CD4-positive, alpha-beta T cell (primary cell): ENCODE measurements at regions of chr17 and their contacts with region 1.

Region 1: GRCh38 chr17:76557368-76558197 is 17.7 kb downstream of the PRCD start:
- DNase-seq: peak; percentile 86 to 97 (median 90)
- ATAC-seq: peak; percentile 82
- H3K4me3 ChIP-seq: peak overlapping the region; percentile 95
- H3K4me3 Mint-ChIP-seq: peak overlapping the region; percentile 96
- H3K27ac ChIP-seq: peak overlapping the region; percentile 93 to 97
- H3K27ac Mint-ChIP-seq: peak overlapping the region; percentile 97
- H3K4me1 ChIP-seq: peaks cover 58% of the 10 kb centered on the region
- H3K4me1 Mint-ChIP-seq: peaks cover 58% of the 10 kb centered on the region
- H3K27me3 ChIP-seq: no peaks in the 10 kb centered on the region
- H3K27me3 Mint-ChIP-seq: no peaks in the 10 kb centered on the region
- CTCF ChIP-seq: peak; percentile 35

Region 2: GRCh38 chr17:76452660-76453430 is 104.7 kb before region 1 on chr17 and contains the start of gene UBE2O:
- CTCF ChIA-PET with region 1: no interaction called
- POLR2A ChIA-PET with region 1: interaction called, 3 read pairs
- intact Hi-C with region 1: loop called in 1 of 2 experiments (anchors 2 kb)
- DNase-seq: peak; percentile 82 to 97 (median 92)
- ATAC-seq: peak; percentile 90
- H3K4me3 ChIP-seq: peak within 1 kb of the TSS; percentile 69
- H3K4me3 Mint-ChIP-seq: peak within 1 kb of the TSS; percentile 79
- H3K27ac ChIP-seq: peak within 1 kb of the TSS; percentile 50 to 65
- H3K27ac Mint-ChIP-seq: peak within 1 kb of the TSS; percentile 82
- H3K4me1 ChIP-seq: peaks cover 30% of the 10 kb centered on the region
- H3K4me1 Mint-ChIP-seq: peaks cover 45% of the 10 kb centered on the region
- H3K27me3 ChIP-seq: no peaks in the 10 kb centered on the region
- H3K27me3 Mint-ChIP-seq: no peaks in the 10 kb centered on the region
- CTCF ChIP-seq: peak; percentile 47
- total RNA-seq, gene UBE2O: 22.7 to 25.1 TPM

Region 3: DNA sequence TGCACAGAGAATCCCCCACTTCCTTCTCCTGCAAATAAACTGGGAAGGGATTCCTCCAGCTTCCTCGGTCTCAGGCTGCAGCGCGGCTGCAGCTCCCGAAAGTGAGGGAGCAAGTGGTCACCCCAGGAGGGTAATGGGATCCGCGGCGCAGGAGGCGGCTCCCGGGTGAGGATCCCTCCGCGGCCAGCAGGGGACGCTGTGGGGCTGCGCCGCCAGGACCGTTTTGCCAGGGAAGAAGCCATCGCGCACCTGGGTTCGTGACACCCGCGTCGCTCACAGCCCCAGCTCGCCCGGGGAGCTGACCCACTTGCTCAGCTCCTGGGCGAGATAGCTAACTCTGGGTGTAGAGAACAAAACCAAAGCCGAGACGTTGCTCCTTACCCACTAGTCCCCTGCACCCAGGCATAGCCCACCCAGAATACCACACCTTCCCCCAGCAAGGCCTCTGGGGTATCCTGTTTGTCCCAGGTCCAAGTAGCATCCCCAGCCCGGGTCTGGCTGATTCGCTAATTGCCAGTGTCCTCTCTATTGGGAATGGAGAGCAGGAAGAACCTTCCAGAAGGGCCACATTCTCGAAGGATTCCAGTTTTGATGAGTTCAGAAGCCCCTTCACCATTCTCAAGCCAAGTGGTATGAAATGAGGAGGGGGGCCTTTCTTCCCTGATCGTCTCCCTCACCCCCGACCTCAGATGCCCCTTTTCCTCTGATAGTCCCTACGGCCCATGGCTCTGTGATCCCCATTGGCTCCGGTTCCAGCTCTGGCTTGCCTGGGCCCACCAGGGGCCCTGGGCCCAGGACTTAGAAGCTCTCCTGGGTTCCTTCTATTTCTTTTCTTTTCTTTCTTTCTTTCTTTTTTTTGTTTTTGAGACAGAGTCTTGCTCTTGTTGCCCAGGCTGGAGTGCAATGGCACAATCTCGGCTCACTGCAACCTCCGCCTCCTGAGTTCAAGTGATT is 34.2 kb before region 1 on chr17:
- CTCF ChIA-PET with region 1: interaction called, 14 read pairs
- POLR2A ChIA-PET with region 1: interaction called, 5 read pairs
- intact Hi-C with region 1: loop called in 1 of 2 experiments (anchors 5 kb)
- DNase-seq: peak; percentile 66 to 93 (median 81)
- ATAC-seq: peak; percentile 88
- H3K4me3 ChIP-seq: no peak overlapping the region
- H3K4me3 Mint-ChIP-seq: no peak overlapping the region
- H3K27ac ChIP-seq: no peak overlapping the region
- H3K27ac Mint-ChIP-seq: peak overlapping the region; percentile 41
- H3K4me1 ChIP-seq: peaks cover 35% of the 10 kb centered on the region
- H3K4me1 Mint-ChIP-seq: peaks cover 26% of the 10 kb centered on the region
- H3K27me3 ChIP-seq: no peaks in the 10 kb centered on the region
- H3K27me3 Mint-ChIP-seq: no peaks in the 10 kb centered on the region
- CTCF ChIP-seq: peak; percentile 99

Region 4: DNA sequence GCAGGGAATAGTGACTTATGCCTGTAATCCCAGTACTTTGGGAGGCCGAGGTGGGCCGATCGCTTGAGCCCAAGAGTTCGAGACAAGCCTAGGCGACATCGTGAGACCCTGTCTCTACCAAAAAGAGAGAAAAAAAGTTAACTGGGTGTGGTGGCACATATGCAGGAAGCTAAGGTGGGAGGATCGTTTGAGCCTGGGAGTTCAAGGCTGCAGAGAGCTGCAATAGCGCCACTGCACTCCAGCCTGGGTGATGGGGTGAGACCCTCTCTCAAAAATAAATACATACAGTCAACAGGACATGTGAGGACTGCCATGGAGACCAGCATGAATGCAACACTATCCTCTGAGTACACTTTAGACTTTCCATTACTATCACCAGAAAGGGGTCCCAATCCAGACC is 43.5 kb after region 1 on chr17:
- CTCF ChIA-PET with region 1: no interaction called
- POLR2A ChIA-PET with region 1: no interaction called
- intact Hi-C with region 1: no loop called
- DNase-seq: no peak
- ATAC-seq: no peak
- H3K4me3 ChIP-seq: no peak overlapping the region
- H3K4me3 Mint-ChIP-seq: no peak overlapping the region
- H3K27ac ChIP-seq: no peak overlapping the region
- H3K27ac Mint-ChIP-seq: no peak overlapping the region
- H3K4me1 ChIP-seq: peaks cover 18% of the 10 kb centered on the region
- H3K4me1 Mint-ChIP-seq: peaks cover 18% of the 10 kb centered on the region
- H3K27me3 ChIP-seq: no peaks in the 10 kb centered on the region
- H3K27me3 Mint-ChIP-seq: peaks cover 26% of the 10 kb centered on the region
- CTCF ChIP-seq: no peak

Region 5: DNA sequence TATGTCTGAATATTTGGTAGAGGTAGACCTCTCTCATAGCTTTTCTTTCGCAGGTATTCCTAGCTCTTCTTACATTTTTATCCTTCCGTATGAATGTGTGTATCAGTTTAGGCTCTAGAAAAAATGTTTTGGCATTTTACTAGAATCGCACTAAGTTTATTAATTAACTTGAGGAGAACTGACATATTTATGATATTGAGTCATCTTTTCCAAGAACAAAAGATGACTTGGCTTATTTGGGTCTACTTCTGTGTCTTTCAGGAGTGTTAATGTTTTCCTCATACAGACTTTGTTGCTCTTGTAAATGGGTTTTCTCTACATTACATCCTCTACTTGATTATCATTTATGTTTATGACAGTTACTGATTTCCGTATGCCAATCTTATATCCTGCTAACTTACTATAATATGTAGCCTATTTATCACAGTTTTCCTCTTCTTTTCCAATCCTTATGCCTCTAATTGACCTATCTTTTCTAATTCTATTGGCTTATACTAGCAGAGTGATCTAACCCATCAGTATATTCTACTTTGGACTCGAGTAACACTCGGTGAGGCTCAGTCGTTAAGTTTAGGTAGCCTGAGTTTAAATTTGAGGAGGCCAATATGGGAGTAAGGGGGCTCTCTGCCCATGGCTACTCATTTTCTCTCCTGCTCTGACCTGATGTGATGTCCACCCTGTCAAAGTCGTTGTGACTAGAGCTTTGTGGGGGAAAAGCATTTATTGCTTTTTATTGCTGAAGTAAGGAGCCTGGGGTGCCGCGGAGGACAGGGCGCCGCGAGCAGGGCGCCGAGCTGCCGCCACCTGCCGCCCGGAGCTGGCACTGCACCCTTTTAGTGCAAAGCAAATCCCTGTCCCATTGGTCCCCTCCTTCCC is 65.9 kb after region 1 on chr17:
- CTCF ChIA-PET with region 1: interaction called, 21 read pairs
- POLR2A ChIA-PET with region 1: interaction called, 10 read pairs
- intact Hi-C with region 1: loop called in 1 of 2 experiments (anchors 1 kb)
- DNase-seq: peak; percentile 59 to 87 (median 74)
- ATAC-seq: peak; percentile 99
- H3K4me3 ChIP-seq: no peak overlapping the region
- H3K4me3 Mint-ChIP-seq: no peak overlapping the region
- H3K27ac ChIP-seq: no peak overlapping the region
- H3K27ac Mint-ChIP-seq: no peak overlapping the region
- H3K4me1 ChIP-seq: peaks cover 5% of the 10 kb centered on the region
- H3K4me1 Mint-ChIP-seq: peaks cover 5% of the 10 kb centered on the region
- H3K27me3 ChIP-seq: no peaks in the 10 kb centered on the region
- H3K27me3 Mint-ChIP-seq: peaks cover 10% of the 10 kb centered on the region
- CTCF ChIP-seq: peak; percentile 94

Region 6: DNA sequence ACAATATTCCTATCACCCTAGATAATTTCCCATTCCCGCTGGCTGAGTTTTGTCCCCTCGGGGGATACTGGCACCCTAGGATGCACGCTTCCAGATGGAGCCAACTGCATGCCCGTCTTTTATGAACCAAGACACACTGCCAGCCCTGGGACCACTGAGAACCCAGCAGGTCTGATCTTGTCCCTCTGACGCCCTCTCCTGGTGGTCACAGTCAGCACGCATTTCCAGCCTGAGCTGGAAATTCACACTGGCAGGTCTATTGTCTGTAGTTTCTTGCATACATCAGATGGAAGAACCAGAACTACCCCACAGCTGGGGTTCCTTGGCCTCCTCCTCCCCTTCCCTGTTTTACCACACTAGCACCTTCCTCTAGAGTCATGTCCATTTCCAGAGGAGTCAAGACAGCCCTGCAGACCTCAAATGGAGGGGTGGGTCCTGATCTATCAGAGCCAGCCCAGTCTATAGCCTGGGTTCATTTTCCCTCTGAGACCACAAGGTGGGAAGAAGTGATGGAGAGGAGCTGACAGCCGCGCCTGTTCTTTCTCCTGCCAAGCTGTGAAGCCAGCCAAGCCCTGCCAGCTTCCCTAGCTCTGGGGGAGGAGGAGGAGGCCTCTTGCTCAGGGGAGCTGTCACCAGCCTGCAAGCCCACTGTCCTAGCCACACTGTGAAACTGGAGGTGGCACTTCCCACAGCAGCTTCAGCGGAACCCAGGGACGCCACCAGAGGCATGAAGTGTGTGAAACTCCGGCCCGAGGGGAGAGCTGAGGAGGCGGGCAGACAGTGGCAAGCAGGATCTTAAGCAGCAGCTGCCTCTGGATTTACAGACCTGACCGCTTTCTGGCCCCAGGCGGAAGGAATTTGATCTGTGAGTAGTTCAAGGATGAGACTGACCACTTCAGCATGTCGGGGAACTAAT is 123.9 kb after region 1 on chr17:
- CTCF ChIA-PET with region 1: interaction called, 7 read pairs
- POLR2A ChIA-PET with region 1: interaction called, 8 read pairs
- intact Hi-C with region 1: loop called (anchors 1 to 2 kb)
- DNase-seq: peak; percentile 63 to 85 (median 72)
- ATAC-seq: peak; percentile 86
- H3K4me3 ChIP-seq: no peak overlapping the region
- H3K4me3 Mint-ChIP-seq: no peak overlapping the region
- H3K27ac ChIP-seq: no peak overlapping the region
- H3K27ac Mint-ChIP-seq: peak overlapping the region; percentile 53
- H3K4me1 ChIP-seq: peaks cover 45% of the 10 kb centered on the region
- H3K4me1 Mint-ChIP-seq: peaks cover 11% of the 10 kb centered on the region
- H3K27me3 ChIP-seq: no peaks in the 10 kb centered on the region
- H3K27me3 Mint-ChIP-seq: no peaks in the 10 kb centered on the region
- CTCF ChIP-seq: peak; percentile 65

Region 7: GRCh38 chr17:76791053-76791980 is 233.7 kb after region 1 on chr17:
- CTCF ChIA-PET with region 1: no interaction called
- POLR2A ChIA-PET with region 1: no interaction called
- intact Hi-C with region 1: no loop called
- DNase-seq: peak in 13 of 14 experiments; percentile 5 to 61 (median 42)
- ATAC-seq: peak; percentile 84
- H3K4me3 ChIP-seq: no peak overlapping the region
- H3K4me3 Mint-ChIP-seq: peak overlapping the region; percentile 8
- H3K27ac ChIP-seq: peak overlapping the region in 1 of 2 donors; percentile 5
- H3K27ac Mint-ChIP-seq: peak overlapping the region; percentile 45
- H3K4me1 ChIP-seq: peaks cover 11% of the 10 kb centered on the region
- H3K4me1 Mint-ChIP-seq: peaks cover 11% of the 10 kb centered on the region
- H3K27me3 ChIP-seq: no peaks in the 10 kb centered on the region
- H3K27me3 Mint-ChIP-seq: no peaks in the 10 kb centered on the region
- CTCF ChIP-seq: no peak